ENCODE measurements at regions of chr11 and their contacts with region 1.

Region 1: GRCh38 chr11:10792398-10792975 is 16.2 kb downstream of the EIF4G2 start:
- DNase-seq: peak; percentile 91
- ATAC-seq: peak; percentile 92 to 98

Region 2: GRCh38 chr11:10906513-10906912 is 114.0 kb after region 1 on chr11:
- intact Hi-C with region 1: loop called in 1 of 2 experiments (anchors 10 kb)
- DNase-seq: no peak
- ATAC-seq: no peak

Region 3: DNA sequence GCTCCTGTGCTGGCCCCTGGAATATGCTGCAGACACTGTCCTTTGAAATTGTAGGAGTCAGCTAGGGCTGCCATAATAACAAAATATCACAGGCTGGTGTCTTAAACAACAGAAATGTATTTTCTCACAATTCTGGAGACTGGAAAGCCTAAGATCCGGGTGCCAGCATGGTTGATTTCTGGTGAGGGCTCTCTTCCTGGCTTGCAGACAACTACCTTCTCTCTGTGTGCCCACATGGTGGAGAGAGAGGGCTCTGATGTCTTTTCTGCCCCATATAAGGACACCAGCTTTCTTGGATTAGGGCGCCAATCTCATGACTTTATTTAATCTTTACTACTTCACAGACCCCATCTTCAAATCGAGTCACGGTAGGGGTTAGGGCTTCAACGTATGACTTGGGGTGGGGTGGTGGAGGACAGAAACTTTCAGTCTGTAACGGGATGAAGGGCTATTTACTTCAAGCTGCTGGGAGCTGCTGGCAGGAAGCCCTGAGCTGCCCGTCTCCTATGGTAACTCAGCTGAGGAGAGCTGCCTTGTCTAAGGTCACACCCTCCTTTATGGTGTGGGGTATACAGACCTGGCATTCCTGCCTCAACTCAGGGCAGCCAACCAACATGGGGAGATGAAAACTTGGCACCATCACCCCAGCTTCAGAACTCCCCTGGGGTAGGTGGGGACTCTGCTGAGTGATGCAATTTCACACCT is 208.2 kb after region 1 on chr11:
- intact Hi-C with region 1: no loop called
- DNase-seq: no peak
- ATAC-seq: peak in 1 of 2 donors; percentile 61

Region 4: DNA sequence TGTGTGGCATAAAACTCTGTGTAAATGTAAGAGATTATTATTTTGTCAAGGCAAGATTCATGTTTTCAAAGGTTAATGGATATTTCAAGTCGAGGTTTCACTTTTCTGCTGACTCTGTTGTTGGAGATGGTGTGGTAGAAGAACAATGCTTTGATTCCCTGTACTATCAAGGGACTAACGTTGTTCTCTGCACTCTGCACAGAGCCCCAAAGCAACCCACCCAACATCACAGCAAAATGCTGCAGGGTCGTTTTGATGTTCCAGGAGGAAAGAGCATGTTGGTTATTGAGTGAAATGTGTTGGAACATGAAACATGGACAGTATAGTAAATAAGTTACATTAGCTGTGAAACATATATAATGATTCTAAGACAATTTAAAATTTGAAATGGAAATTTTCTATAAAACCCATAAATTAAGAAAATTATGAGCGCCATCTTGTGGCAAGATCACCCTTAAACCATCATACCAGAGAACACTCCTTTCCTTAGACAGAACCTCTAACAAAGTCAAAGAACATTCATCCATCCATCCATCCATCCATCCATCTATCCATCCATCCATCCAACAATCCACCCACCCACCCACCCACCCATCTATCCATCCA is 229.7 kb after region 1 on chr11:
- intact Hi-C with region 1: loop called (anchors 2 to 5 kb)
- DNase-seq: no peak
- ATAC-seq: no peak

Measured in left cardiac atrium (tissue), 4 donors.